ENCODE measurements at regions of chr1 and their contacts with region 1.

Region 1: DNA sequence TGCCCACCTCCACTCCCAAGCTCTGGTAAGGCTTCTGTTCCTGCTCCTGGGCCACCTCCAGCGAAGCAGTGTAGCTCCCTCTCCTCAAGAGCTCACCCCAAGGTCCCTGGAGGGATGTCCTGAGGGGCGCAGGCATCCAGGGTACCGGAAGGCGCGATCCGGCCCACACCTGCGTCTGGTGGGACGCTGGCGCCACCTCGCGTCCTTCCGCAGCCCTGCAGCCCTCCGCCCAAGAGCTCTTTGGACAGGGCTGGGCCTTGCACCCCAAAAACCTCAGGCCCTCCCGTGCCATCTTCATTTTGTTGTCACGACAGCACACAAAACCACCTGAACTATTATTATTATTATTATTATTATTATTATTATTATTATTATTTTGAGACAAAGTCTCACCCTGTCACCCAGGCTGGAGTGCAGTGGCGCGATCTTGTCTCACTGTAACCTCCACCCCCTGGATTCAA is 49.2 kb upstream of the PAX7 start:
- DNase-seq: no peak
- ATAC-seq: no peak

Region 2: GRCh38 chr1:17494114-17494729 is 1087.2 kb before region 1 on chr1:
- intact Hi-C with region 1: loop called (anchors 10 kb)
- DNase-seq: peak; percentile 76
- ATAC-seq: peak; percentile 88

Region 3: GRCh38 chr1:18643154-18644012 is 61.9 kb after region 1 on chr1:
- intact Hi-C with region 1: no loop called
- DNase-seq: no peak
- ATAC-seq: no peak